ENCODE measurements at regions of chr11 and their contacts with region 1.

Region 1: DNA sequence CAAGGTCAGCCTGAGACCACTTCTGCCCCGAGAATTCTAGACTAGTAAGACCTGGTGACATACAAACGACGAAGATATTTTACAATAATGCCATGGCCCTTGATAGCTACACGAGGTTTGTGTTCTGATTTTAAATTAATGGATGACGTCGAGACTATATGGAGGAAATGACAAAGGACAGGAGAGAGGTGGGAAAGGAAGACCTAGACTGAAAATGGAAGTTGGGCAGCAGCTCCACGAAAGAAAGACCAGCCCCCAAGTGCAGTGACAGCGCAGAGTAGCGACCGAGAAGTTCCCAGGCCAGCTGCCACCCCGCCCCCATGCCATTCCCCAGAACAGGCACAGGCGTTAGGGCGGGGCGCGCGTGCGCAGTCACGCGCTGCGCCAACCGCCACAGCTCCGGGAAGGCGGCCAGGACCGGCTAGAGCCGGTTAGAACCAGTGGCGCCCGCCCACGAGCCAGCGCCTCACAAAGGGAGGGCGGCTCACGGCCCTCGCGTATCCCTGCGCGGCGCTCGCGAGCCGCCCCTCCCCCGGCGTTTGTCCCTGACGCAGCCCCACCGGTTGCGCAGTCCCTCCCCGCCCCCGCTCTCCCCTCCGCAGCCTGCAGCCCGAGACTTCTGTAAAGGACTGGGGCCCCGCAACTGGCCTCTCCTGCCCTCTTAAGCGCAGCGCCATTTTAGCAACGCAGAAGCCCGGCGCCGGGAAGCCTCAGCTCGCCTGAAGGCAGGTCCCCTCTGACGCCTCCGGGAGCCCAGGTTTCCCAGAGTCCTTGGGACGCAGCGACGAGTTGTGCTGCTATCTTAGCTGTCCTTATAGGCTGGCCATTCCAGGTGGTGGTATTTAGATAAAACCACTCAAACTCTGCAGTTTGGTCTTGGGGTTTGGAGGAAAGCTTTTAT is 1.5 kb upstream of the MALAT1 start:
- DNase-seq: peak; percentile 87
- CTCF ChIP-seq: no peak

Region 2: DNA sequence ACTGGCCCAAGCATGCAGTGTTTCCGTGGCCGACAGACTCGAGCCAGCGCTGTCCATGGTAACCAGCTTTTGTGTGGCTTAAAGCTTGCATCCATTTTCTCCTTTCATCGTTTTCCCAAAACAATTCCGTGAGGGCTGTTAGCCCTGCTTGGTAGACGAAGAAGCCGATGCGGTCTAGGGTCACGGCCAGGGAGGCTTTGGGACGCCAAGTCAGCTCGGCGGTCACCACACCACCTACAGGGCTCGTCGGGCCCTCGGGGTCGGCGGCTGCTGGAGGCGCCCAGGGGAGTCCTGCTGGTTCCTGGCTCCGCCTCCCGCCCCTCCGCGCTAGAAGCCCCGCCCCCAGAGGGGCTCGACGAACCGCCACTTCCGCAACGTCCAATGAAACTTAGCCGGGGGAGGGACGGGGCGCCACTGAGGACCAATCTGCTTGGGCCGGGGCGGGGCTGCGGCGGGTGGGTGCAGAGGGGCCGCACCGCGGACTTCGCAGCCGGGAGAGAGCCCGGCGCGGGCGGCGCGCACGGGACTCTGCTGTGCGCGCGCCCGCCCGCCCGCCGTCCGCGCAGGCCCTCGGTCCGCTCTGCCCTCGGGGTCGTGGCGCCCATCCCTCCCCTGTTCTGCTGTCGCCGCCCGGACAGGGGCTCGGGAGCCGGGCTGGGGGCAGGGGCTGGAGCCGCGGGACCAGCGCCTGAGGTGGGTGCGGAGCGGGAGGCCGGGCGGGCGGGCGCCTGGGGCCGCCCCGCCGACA is 143.0 kb before region 1 on chr11 and contains the start of gene TIGD3:
- CTCF ChIA-PET with region 1: no interaction called
- POLR2A ChIA-PET with region 1: interaction called, 10 read pairs
- DNase-seq: peak; percentile 100
- CTCF ChIP-seq: no peak

Region 3: DNA sequence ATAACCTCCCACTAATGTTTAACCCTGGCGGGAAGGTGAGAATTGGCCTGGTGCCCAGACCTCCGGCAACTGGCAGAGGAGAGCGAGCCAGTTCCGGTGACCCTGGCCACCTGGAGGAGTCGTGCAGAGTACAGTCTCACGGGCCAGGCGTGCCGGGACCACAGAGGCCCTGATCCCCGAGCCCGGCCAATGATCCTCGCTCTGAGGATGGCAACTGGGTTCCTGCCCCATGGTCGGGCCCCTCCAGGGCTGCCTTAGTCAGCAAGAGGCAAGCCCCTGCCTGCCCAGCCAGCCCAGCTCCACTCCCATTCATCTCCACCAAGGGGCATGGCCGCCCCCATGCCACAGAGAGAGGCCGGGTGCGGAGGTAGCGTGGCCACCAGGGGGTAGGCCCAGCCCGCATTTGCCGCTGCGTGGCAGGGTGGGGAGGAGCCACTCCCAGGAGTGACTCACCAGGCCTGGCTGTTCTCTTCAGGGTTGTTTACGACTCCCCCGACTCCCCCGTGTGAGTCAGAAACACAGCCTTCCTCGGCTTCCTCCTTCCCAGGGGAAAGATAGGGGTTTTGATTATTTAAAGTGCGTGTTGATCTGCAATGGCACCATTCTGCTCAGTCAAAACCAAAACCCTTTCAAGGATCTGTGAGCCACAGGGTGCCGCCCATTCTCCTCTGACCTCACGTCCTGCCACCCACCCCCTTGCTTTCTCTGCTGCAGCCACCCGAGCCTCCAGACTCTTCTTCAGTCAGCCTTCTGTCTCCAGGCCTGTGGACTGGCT is 115.2 kb before region 1 on chr11 and contains the start of gene SLC25A45:
- CTCF ChIA-PET with region 1: interaction called, 4 read pairs
- POLR2A ChIA-PET with region 1: interaction called, 10 read pairs
- DNase-seq: peak; percentile 79
- CTCF ChIP-seq: peak; percentile 70

Region 4: GRCh38 chr11:65546217-65546958 is 49.0 kb after region 1 on chr11:
- CTCF ChIA-PET with region 1: no interaction called
- POLR2A ChIA-PET with region 1: no interaction called
- DNase-seq: peak; percentile 98
- CTCF ChIP-seq: no peak

Region 5: GRCh38 chr11:65625628-65626342 is 128.4 kb after region 1 on chr11:
- CTCF ChIA-PET with region 1: no interaction called
- POLR2A ChIA-PET with region 1: no interaction called
- DNase-seq: peak; percentile 84
- CTCF ChIP-seq: peak; percentile 71